ENCODE measurements at regions of chr20 and their contacts with region 1.

Region 1: GRCh38 chr20:39264506-39265172 is 302.5 kb downstream of the DHX35 start:
- DNase-seq: no peak
- ATAC-seq: no peak
- H3K4me3 Mint-ChIP-seq: no peak overlapping the region
- H3K27ac Mint-ChIP-seq: no peak overlapping the region
- H3K4me1 Mint-ChIP-seq: no peaks in the 10 kb centered on the region
- H3K27me3 Mint-ChIP-seq: peaks cover 6% of the 10 kb centered on the region
- CTCF ChIP-seq: peak; percentile 74

Region 2: DNA sequence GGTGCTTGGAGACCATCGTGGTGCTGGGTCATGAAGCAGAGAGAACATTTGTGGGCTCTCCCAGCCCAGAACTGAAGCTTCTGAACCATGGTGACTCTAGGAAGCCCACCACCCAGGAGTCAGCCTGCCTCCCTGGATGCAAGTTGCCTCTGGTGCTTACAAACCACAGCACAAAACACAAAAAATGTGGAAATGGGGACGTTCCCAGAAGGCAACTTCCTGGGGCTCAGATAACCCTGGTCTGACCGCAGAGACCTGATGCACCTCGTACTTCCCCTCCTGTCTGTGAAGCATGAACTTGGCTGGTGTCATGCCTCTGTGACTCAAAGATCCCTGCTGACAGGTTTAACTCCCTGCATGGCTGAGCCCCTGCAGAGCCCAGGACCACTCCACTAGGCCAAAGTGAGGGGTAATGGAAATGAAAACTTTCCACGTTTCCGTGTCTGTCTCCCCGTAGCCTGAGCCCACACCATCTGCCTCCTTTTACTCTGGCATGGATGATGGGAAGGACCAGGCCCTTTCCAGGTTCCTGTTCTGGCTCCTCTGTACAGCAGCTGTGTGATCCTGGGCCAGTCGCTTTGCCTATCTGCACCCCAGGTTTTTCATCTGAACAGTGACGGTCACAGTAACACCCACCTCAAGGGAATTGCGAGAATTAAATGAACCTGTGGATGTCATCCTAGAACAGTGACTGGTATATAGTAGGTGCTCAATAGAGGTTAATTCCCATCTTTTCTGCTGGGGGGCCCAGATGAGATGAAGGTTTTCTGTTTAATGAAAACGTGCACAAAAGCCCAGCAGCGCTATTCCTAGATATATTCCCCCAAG is 401.4 kb before region 1 on chr20:
- CTCF ChIA-PET with region 1: no interaction called
- POLR2A ChIA-PET with region 1: no interaction called
- intact Hi-C with region 1: no loop called
- DNase-seq: peak; percentile 52
- ATAC-seq: peak; percentile 78
- H3K4me3 Mint-ChIP-seq: peak overlapping the region; percentile 76
- H3K27ac Mint-ChIP-seq: peak overlapping the region; percentile 95
- H3K4me1 Mint-ChIP-seq: peaks cover 94% of the 10 kb centered on the region
- H3K27me3 Mint-ChIP-seq: no peaks in the 10 kb centered on the region
- CTCF ChIP-seq: no peak

Region 3: GRCh38 chr20:39398656-39399055 is 134.0 kb after region 1 on chr20:
- CTCF ChIA-PET with region 1: interaction called, 15 read pairs
- POLR2A ChIA-PET with region 1: no interaction called
- intact Hi-C with region 1: loop called (anchors 5 kb)
- DNase-seq: no peak
- ATAC-seq: no peak
- H3K4me3 Mint-ChIP-seq: no peak overlapping the region
- H3K27ac Mint-ChIP-seq: no peak overlapping the region
- H3K4me1 Mint-ChIP-seq: no peaks in the 10 kb centered on the region
- H3K27me3 Mint-ChIP-seq: peaks cover 7% of the 10 kb centered on the region
- CTCF ChIP-seq: no peak

Region 4: DNA sequence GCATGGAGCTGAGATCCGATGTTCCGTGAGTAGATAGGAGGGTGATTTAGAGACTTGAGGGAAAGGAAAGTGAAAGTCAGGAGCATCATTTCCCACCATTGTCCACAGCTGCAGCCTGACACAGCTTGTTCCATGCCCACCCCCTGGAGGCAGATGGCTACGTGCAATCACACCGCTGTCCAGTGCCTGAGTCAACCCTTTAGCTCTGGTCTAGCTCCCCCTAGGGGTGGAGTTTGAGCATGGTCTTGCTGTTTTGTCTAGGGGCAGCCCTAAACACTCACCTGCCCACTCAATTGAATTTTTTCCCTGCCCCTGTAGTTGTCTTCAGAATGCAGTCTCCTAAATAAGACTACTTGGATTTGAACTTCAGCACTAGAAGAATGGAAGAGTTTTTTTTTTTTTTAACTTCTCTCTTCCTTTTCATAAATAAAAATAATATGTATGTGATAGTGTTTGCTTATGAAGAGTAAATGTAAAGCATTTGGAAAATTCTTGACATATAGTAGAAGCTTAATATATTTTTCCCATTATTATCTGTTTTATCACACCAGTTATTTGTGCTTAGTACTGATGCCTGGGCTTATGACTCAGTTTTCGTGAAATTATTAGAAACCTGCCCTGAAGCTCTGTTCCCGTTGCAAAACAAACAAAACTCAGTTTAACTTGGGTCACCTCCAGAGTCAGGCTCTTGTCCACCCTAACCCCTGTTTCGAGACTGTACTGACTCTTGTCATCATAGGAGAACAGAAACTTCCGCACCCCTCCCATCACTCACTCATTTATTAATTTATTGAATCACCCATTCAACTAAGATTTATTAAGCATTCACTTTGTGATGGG is 609.6 kb after region 1 on chr20:
- CTCF ChIA-PET with region 1: interaction called, 39 read pairs
- POLR2A ChIA-PET with region 1: interaction called, 9 read pairs
- intact Hi-C with region 1: loop called (anchors 1 kb)
- DNase-seq: peak; percentile 23
- ATAC-seq: peak; percentile 95
- H3K4me3 Mint-ChIP-seq: no peak overlapping the region
- H3K27ac Mint-ChIP-seq: peak overlapping the region; percentile 24
- H3K4me1 Mint-ChIP-seq: peaks cover 9% of the 10 kb centered on the region
- H3K27me3 Mint-ChIP-seq: no peaks in the 10 kb centered on the region
- CTCF ChIP-seq: no peak